ENCODE measurements at regions of chr19 and their contacts with region 1.

Region 1: GRCh38 chr19:18091217-18091608 is 4.5 kb upstream of the IL12RB1 start:
- DNase-seq: peak; percentile 54 to 94 (median 82)
- ATAC-seq: peak; percentile 61
- H3K4me3 ChIP-seq: peak overlapping the region in 1 of 2 experiments; percentile 3
- H3K4me3 Mint-ChIP-seq: peak overlapping the region; percentile 56
- H3K27ac ChIP-seq: peak overlapping the region; percentile 54 to 97
- H3K27ac Mint-ChIP-seq: peak overlapping the region; percentile 97
- H3K4me1 ChIP-seq: peaks cover 68% of the 10 kb centered on the region
- H3K4me1 Mint-ChIP-seq: peaks cover 68% of the 10 kb centered on the region
- H3K27me3 ChIP-seq: no peaks in the 10 kb centered on the region
- H3K27me3 Mint-ChIP-seq: no peaks in the 10 kb centered on the region
- CTCF ChIP-seq: no peak

Region 2: DNA sequence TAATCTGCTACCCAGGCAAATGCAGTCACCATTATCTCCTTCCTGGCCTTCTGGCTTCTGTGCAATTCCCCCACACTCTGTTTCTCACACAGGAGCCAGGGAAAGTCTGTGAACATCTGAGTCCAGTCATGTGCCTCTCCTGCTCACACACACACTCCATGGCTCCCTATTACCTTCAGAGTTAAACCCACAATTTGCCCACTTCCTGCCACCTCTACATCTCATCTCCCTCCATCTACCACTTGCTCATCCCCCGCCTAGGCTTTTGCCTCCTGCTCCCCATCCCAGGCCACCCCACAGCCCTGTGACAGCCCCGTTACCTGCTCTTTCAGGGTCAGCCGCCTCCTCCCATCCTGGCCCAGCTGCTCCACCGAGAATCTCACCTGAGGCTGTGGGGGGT is 18.0 kb before region 1 on chr19:
- CTCF ChIA-PET with region 1: no interaction called
- POLR2A ChIA-PET with region 1: no interaction called
- intact Hi-C with region 1: no loop called
- DNase-seq: peak in 1 of 9 experiments; percentile 41
- ATAC-seq: peak; percentile 40
- H3K4me3 ChIP-seq: no peak overlapping the region
- H3K4me3 Mint-ChIP-seq: no peak overlapping the region
- H3K27ac ChIP-seq: peak overlapping the region in 1 of 2 experiments; percentile 12
- H3K27ac Mint-ChIP-seq: no peak overlapping the region
- H3K4me1 ChIP-seq: peaks cover 8% of the 10 kb centered on the region
- H3K4me1 Mint-ChIP-seq: peaks cover 15% of the 10 kb centered on the region
- H3K27me3 ChIP-seq: no peaks in the 10 kb centered on the region
- H3K27me3 Mint-ChIP-seq: no peaks in the 10 kb centered on the region
- CTCF ChIP-seq: no peak

Region 3: DNA sequence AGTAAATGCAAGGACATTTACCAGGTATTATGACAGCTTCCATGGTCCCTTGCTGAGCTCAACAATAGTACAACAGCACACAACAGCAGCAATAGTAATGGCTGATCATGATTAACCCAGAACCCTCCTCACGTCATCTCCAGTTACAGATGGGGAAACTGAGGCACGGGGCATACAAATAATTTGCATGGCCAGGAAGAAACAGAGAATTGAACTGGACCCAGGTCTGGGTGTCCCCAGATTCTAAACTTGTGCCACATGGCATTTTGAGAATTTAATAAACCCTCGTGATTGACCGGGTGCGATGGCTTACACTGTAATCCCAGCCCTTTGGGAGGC is 13.5 kb after region 1 on chr19:
- CTCF ChIA-PET with region 1: interaction called, 5 read pairs
- POLR2A ChIA-PET with region 1: interaction called, 19 read pairs
- intact Hi-C with region 1: loop called in 1 of 2 experiments (anchors 2 kb)
- DNase-seq: no peak
- ATAC-seq: no peak
- H3K4me3 ChIP-seq: peak overlapping the region; percentile 43 to 62
- H3K4me3 Mint-ChIP-seq: peak overlapping the region; percentile 77
- H3K27ac ChIP-seq: peak overlapping the region; percentile 50 to 56
- H3K27ac Mint-ChIP-seq: peak overlapping the region; percentile 73
- H3K4me1 ChIP-seq: peaks cover 18% of the 10 kb centered on the region
- H3K4me1 Mint-ChIP-seq: peaks cover 23% of the 10 kb centered on the region
- H3K27me3 ChIP-seq: no peaks in the 10 kb centered on the region
- H3K27me3 Mint-ChIP-seq: no peaks in the 10 kb centered on the region
- CTCF ChIP-seq: no peak

Region 4: GRCh38 chr19:18109733-18110595 is 18.8 kb after region 1 on chr19:
- CTCF ChIA-PET with region 1: interaction called, 20 read pairs
- POLR2A ChIA-PET with region 1: interaction called, 19 read pairs
- intact Hi-C with region 1: loop called in 1 of 2 experiments (anchors 1 kb)
- DNase-seq: peak in 6 of 9 experiments; percentile 48 to 72 (median 58)
- ATAC-seq: peak; percentile 79
- H3K4me3 ChIP-seq: peak overlapping the region; percentile 74
- H3K4me3 Mint-ChIP-seq: peak overlapping the region; percentile 82
- H3K27ac ChIP-seq: peak overlapping the region; percentile 41 to 53
- H3K27ac Mint-ChIP-seq: peak overlapping the region; percentile 86
- H3K4me1 ChIP-seq: peaks cover 21% of the 10 kb centered on the region
- H3K4me1 Mint-ChIP-seq: peaks cover 18% of the 10 kb centered on the region
- H3K27me3 ChIP-seq: no peaks in the 10 kb centered on the region
- H3K27me3 Mint-ChIP-seq: no peaks in the 10 kb centered on the region
- CTCF ChIP-seq: no peak